ENCODE measurements at regions of chr1 and their contacts with region 1.

Region 1: GRCh38 chr1:151621351-151621750 is 9.5 kb downstream of the SNX27 start:
- DNase-seq: no peak
- ATAC-seq: no peak
- H3K4me3 ChIP-seq: no peak overlapping the region
- H3K4me3 Mint-ChIP-seq: no peak overlapping the region
- H3K27ac ChIP-seq: no peak overlapping the region
- H3K27ac Mint-ChIP-seq: peak overlapping the region in 1 of 2 donors; percentile 42
- H3K4me1 ChIP-seq: no peaks in the 10 kb centered on the region
- H3K4me1 Mint-ChIP-seq: peaks cover 26 to 45% (median 41%) of the 10 kb centered on the region in 3 donors
- H3K27me3 ChIP-seq: no peaks in the 10 kb centered on the region
- H3K27me3 Mint-ChIP-seq: no peaks in the 10 kb centered on the region

Region 2: DNA sequence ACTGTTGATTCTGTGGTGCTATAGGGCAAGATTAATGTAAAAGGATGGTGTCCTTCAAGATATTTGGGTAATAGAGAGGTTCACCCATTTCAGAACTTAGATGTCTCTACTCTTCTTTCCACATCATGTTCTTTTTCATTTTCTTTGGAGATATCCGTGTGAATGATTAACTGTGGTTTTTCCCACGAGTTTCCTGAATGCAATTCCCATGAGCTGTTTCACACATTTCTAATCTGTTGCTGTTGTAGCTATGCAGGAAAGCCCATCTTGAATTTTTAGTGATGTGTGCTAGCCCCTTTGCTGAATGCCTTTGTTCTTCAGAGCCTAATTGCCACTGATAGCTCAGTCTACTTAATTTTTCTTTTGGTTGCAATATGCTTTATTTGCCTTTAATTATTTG is 18.1 kb after region 1 on chr1:
- CTCF ChIA-PET with region 1: interaction called in 1 of 2 experiments, 3 read pairs
- POLR2A ChIA-PET with region 1: interaction called in 1 of 2 experiments, 10 read pairs
- DNase-seq: no peak
- ATAC-seq: no peak
- H3K4me3 ChIP-seq: no peak overlapping the region
- H3K4me3 Mint-ChIP-seq: no peak overlapping the region
- H3K27ac ChIP-seq: no peak overlapping the region
- H3K27ac Mint-ChIP-seq: no peak overlapping the region
- H3K4me1 ChIP-seq: no peaks in the 10 kb centered on the region
- H3K4me1 Mint-ChIP-seq: peaks cover 5 to 14% (median 11%) of the 10 kb centered on the region in 3 donors
- H3K27me3 ChIP-seq: no peaks in the 10 kb centered on the region
- H3K27me3 Mint-ChIP-seq: no peaks in the 10 kb centered on the region

Measured in T-cell (primary cell).